HepG2 (cell line): ENCODE measurements at regions of chr9 and their contacts with region 1.

Region 1: DNA sequence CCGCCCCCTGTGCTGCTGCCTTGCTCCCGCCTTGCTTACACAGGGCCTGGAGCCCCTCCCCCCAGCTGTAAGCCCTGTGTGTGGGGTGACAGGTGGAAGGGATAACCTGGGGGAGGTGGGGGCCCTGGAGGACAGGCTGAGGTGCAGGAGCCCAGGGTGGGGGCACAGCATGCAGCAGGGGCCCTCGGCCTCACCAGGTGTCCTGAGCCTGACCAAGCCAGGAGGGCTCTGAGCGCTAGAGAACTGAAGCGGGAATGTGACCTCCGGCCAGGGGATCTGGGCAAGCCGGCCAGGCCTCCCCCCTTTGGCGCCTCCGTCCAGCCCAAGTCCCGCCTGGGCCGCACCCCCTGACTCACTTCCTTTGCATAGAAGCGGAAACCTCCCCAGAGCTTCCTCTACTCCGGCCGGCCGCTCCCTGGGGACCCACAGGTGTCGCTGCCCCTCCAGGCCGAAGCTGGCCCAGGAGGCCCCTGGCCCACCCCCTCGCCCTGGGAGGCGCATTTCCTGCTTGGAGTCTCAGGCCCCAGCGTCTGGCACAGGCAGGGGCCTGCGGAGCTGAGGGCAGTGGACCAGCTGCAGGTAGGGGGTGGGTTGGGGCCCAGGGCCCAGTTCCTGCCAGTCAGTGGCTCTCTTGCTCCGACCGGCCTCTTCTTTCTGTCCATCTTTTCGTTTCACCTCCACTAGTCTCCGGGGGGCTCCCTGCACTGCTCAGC is at the start of gene TOR4A:
- DNase-seq: peak; percentile 94
- ATAC-seq: peak; percentile 87
- H3K4me3 ChIP-seq: peak within 1 kb of the TSS; percentile 87 to 90 (median 88)
- H3K27ac ChIP-seq: peak within 1 kb of the TSS; percentile 90
- H3K4me1 ChIP-seq: peaks cover 21% of the 10 kb centered on the region
- H3K27me3 ChIP-seq: no peaks in the 10 kb centered on the region; a peak in 1 of 5 replicates
- CTCF ChIP-seq: peak; percentile 83
- EP300 ChIP-seq: peak; percentile 20 to 39; a peak in 2 of 4 replicates
- POLR2A ChIP-seq: peak in 1 of 2 experiments; percentile 85; a peak in 2 of 4 replicates
- RAD21 ChIP-seq: peak; percentile 62
- total RNA-seq, gene TOR4A: 7.0 and 14.2 TPM in 2 replicates

Region 2: DNA sequence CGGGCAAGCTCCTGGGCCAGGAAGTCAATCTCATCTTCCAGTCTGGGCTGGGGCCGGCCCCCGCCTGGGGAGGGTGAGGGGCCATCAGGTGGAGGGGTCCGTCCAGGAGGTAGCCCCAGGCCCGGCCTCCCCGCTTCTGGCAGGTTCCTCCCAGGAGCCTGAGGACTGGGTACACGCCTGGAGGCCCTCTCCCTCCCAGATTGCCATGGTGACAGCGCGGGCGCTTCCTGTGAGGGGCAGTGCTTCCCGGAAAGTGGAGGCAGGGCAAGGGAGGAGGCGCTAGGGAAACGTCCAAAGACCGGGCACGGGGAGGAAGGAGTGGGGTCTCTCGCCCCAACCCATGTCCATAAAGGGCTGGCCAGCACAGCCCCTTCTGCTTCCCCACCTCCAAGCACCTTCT is 236.4 kb before region 1 on chr9:
- CTCF ChIA-PET with region 1: no interaction called
- POLR2A ChIA-PET with region 1: no interaction called
- in situ Hi-C with region 1: no loop called
- intact Hi-C with region 1: no loop called
- DNase-seq: no peak
- ATAC-seq: no peak
- H3K4me3 ChIP-seq: no peak overlapping the region
- H3K27ac ChIP-seq: no peak overlapping the region
- H3K4me1 ChIP-seq: peaks cover 22% of the 10 kb centered on the region
- H3K27me3 ChIP-seq: peaks cover 3 to 23% of the 10 kb centered on the region in 2 experiments; a peak in 4 of 5 replicates
- CTCF ChIP-seq: no peak
- EP300 ChIP-seq: no peak
- POLR2A ChIP-seq: no peak
- RAD21 ChIP-seq: no peak

Region 3: DNA sequence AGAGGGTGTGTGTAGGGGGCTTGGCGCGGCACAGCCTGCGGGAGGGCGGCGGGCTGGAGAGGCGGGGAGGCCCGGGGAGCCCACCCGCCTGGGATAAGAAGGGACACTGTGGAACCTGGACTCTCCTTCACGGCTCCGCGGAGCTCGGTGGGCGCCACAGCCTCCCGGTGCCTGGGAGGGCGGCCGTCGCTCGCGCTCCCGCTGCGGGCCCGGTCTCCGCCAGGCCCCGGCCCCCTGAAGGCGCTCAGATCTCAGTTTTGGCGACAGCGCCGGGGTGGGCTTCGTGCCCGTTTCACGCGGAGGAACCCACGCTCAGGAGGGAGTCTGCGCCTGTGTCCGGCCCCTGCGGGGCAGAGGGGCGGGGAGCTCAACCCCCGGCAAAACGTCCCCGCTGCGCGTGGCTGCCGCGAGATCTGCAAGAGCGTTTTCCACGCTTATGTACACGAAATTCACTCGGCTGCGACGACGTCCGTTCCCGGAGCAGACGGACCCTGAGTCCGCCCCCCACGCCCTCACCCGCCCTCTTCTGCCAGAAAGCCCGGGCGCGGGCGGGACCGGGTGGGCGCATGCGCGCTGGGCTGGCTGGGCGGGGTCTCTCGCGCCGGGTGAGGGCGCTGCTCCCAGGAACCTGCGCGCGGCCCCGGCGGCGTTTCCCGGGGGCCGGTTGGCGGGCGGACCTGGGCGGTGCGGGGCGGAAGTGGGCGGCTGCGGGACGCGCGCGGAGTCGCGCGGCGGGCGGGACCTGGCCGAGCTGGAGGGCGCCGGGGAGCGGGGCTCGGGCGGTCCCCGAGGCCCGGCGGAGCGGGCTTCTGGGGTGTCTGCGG is 22.6 kb before region 1 on chr9 and contains the start of gene NELFB:
- CTCF ChIA-PET with region 1: no interaction called
- POLR2A ChIA-PET with region 1: interaction called, 52 read pairs
- in situ Hi-C with region 1: no loop called
- intact Hi-C with region 1: no loop called
- DNase-seq: peak; percentile 76
- ATAC-seq: peak; percentile 53
- H3K4me3 ChIP-seq: peak within 1 kb of the TSS; percentile 91 to 98 (median 91)
- H3K27ac ChIP-seq: peak within 1 kb of the TSS; percentile 80
- H3K4me1 ChIP-seq: peaks cover 57% of the 10 kb centered on the region
- H3K27me3 ChIP-seq: no peaks in the 10 kb centered on the region; a peak in 1 of 5 replicates
- CTCF ChIP-seq: peak; percentile 50
- EP300 ChIP-seq: no peak
- POLR2A ChIP-seq: peak in 1 of 2 experiments; percentile 80; a peak in 2 of 4 replicates
- RAD21 ChIP-seq: peak; percentile 45; the same call in 1 of the 2 replicates
- total RNA-seq, gene NELFB: 38.7 and 45.8 TPM in 2 replicates

Region 4: DNA sequence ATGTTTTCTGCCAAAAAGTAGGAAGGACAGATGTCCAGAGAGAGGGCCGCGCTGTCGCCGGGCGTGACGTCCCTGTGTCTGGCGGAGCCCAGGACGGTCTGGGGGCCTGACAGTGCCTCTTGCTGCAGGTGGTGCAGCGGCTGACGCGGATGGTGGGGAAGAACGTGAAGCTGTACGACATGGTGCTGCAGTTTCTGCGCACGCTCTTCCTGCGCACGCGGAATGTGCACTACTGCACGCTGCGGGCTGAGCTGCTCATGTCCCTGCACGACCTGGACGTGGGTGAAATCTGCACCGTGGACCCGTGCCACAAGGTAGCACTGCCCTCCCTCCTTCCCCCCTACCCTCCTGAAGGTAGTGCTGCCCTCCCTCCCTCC is 14.6 kb before region 1 on chr9:
- CTCF ChIA-PET with region 1: no interaction called
- POLR2A ChIA-PET with region 1: interaction called, 18 read pairs
- in situ Hi-C with region 1: no loop called
- intact Hi-C with region 1: no loop called
- DNase-seq: no peak
- ATAC-seq: no peak
- H3K4me3 ChIP-seq: no peak overlapping the region
- H3K27ac ChIP-seq: no peak overlapping the region
- H3K4me1 ChIP-seq: peaks cover 8% of the 10 kb centered on the region
- H3K27me3 ChIP-seq: no peaks in the 10 kb centered on the region
- CTCF ChIP-seq: no peak
- EP300 ChIP-seq: no peak
- POLR2A ChIP-seq: no peak
- RAD21 ChIP-seq: no peak

Region 5: GRCh38 chr9:137294091-137294683 is 16.7 kb after region 1 on chr9:
- CTCF ChIA-PET with region 1: no interaction called
- POLR2A ChIA-PET with region 1: interaction called, 11 read pairs
- in situ Hi-C with region 1: no loop called
- intact Hi-C with region 1: no loop called
- DNase-seq: peak; percentile 80
- ATAC-seq: peak; percentile 70
- H3K4me3 ChIP-seq: peak overlapping the region; percentile 47 to 67 (median 55)
- H3K27ac ChIP-seq: no peak overlapping the region
- H3K4me1 ChIP-seq: peaks cover 62% of the 10 kb centered on the region
- H3K27me3 ChIP-seq: peaks cover 4 to 27% of the 10 kb centered on the region in 2 experiments; a peak in 4 of 5 replicates
- CTCF ChIP-seq: no peak
- EP300 ChIP-seq: no peak
- POLR2A ChIP-seq: no peak
- RAD21 ChIP-seq: no peak

Region 6: DNA sequence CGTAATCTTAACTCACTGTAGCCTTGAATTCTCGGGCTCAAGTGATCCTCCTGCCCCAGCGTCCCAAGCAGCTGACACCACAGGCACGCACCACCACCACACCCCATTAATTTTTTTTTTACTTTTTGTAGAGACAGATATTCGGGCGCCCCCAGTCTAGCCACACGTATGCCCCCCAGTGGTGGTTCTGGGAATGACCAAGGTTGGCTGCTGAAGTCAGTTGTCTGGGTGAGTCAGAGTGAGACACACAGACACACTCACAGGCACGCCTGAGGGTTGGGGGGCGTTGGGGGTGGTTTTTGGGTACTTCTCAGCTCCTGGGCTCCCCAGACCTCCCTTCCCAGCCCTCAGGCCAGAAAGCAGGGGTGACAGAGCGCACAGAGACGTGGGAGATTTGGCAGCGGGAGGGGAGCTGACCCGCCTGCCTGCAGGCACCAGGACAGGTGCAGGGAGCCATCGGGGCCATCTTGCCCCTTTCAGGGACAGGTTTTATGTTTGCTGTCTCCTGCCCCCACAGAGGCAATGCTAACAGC is 167.9 kb after region 1 on chr9:
- CTCF ChIA-PET with region 1: no interaction called
- POLR2A ChIA-PET with region 1: interaction called, 19 read pairs
- in situ Hi-C with region 1: no loop called
- intact Hi-C with region 1: no loop called
- DNase-seq: peak; percentile 57
- ATAC-seq: peak; percentile 38
- H3K4me3 ChIP-seq: no peak overlapping the region
- H3K27ac ChIP-seq: no peak overlapping the region
- H3K4me1 ChIP-seq: peaks cover 25% of the 10 kb centered on the region
- H3K27me3 ChIP-seq: no peaks in the 10 kb centered on the region
- CTCF ChIP-seq: peak; percentile 84
- EP300 ChIP-seq: no peak
- POLR2A ChIP-seq: peak in 1 of 2 experiments; percentile 39; a peak in 1 of 4 replicates
- RAD21 ChIP-seq: peak; percentile 47; the same call in 1 of the 2 replicates